CD8-positive, alpha-beta T cell (primary cell): ENCODE measurements at regions of chr16 and their contacts with region 1.

Region 1: DNA sequence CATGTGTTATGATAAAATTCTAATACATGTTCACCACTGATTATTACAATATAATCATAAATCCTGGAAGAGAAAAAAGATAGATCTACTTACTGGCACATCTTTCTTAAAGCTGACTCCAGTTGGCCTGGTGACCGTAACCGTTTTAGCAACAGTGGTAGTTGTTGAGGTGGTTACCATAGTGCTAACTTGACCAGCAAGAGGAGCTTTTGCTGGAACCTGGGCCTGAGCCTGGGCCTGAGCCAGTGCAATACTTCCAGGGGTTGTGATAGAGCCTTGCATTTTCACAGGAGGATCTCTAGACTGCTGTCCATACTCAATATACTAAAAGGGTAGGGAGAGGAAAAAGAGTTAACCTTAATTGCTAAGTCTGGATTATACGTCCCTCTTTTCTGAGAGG is 36.2 kb downstream of the SETD6 start:
- DNase-seq: no peak
- ATAC-seq: no peak
- H3K4me3 ChIP-seq: no peak overlapping the region
- H3K4me3 Mint-ChIP-seq: no peak overlapping the region
- H3K27ac ChIP-seq: no peak overlapping the region
- H3K27ac Mint-ChIP-seq: no peak overlapping the region
- H3K4me1 ChIP-seq: no peaks in the 10 kb centered on the region
- H3K4me1 Mint-ChIP-seq: no peaks in the 10 kb centered on the region
- H3K27me3 ChIP-seq: no peaks in the 10 kb centered on the region
- H3K27me3 Mint-ChIP-seq: no peaks in the 10 kb centered on the region
- CTCF ChIP-seq: no peak

Region 2: GRCh38 chr16:58563235-58563634 is 11.7 kb after region 1 on chr16:
- CTCF ChIA-PET with region 1: no interaction called
- POLR2A ChIA-PET with region 1: interaction called, 3 read pairs
- intact Hi-C with region 1: loop called in 1 of 2 experiments (anchors 2 kb)
- DNase-seq: no peak
- ATAC-seq: no peak
- H3K4me3 ChIP-seq: no peak overlapping the region
- H3K4me3 Mint-ChIP-seq: no peak overlapping the region
- H3K27ac ChIP-seq: no peak overlapping the region
- H3K27ac Mint-ChIP-seq: no peak overlapping the region
- H3K4me1 ChIP-seq: no peaks in the 10 kb centered on the region
- H3K4me1 Mint-ChIP-seq: peaks cover 6% of the 10 kb centered on the region
- H3K27me3 ChIP-seq: no peaks in the 10 kb centered on the region
- H3K27me3 Mint-ChIP-seq: no peaks in the 10 kb centered on the region
- CTCF ChIP-seq: no peak

Region 3: DNA sequence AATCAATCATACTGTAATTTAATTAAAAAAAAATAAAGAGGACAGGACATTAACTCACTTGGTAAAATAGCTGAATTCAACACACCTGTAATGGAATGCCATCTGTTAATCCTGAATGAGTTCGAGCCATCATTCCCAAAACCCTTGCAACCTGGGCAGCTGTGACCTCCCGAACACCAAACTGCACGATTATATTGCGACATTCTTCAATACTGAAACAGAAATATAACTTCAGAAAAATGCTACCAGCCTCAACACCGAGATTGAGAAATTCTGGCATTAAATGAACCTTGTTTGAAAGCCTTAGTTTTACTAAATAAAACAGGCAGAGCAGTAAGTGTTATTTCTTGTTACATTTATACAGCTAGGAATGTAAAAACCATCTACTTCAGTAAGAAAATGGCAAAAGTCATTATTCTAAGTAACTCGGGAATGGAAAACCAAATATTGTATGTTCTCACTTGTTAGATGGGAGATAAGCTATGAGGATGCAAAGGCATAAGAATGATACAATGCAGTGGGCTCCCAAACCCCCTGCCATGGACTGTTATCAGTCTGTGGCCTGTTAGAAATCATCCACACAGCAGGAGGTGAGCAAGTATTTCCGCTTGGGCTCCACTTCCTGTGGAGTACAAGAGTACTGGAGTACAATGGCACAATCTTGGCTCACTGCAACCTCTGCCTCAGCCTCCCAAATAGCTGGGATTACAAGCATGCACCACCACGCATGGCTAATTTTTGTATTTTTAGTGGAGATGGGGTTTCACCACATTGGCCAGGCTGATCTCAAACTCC is 31.7 kb after region 1 on chr16:
- CTCF ChIA-PET with region 1: no interaction called
- POLR2A ChIA-PET with region 1: no interaction called
- intact Hi-C with region 1: loop called in 1 of 2 experiments (anchors 5 kb)
- DNase-seq: no peak
- ATAC-seq: no peak
- H3K4me3 ChIP-seq: no peak overlapping the region
- H3K4me3 Mint-ChIP-seq: no peak overlapping the region
- H3K27ac ChIP-seq: no peak overlapping the region
- H3K27ac Mint-ChIP-seq: no peak overlapping the region
- H3K4me1 ChIP-seq: no peaks in the 10 kb centered on the region
- H3K4me1 Mint-ChIP-seq: peaks cover 7% of the 10 kb centered on the region
- H3K27me3 ChIP-seq: no peaks in the 10 kb centered on the region
- H3K27me3 Mint-ChIP-seq: no peaks in the 10 kb centered on the region
- CTCF ChIP-seq: no peak

Region 4: DNA sequence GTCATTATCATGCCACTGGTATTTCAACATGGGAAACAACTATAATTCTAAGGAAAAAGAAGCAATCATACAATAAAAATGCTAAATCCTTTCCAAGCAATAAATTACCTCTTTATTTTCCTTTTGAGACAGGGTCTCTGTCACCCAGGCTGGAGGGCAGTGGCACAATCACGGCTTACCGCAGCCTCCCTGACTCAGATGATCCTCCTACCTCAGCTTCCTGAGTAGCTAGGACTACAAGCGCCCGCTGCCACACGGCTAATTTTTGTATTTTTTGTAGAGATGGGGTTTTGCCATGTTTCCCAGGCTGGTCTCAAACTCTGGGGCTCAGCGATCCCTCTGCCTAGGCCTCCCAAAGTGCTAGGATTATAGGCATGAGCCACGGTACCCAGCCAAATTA is 54.1 kb after region 1 on chr16:
- CTCF ChIA-PET with region 1: no interaction called
- POLR2A ChIA-PET with region 1: no interaction called
- intact Hi-C with region 1: loop called in 1 of 2 experiments (anchors 10 kb)
- DNase-seq: no peak
- ATAC-seq: no peak
- H3K4me3 ChIP-seq: no peak overlapping the region
- H3K4me3 Mint-ChIP-seq: no peak overlapping the region
- H3K27ac ChIP-seq: no peak overlapping the region
- H3K27ac Mint-ChIP-seq: peak overlapping the region; percentile 60
- H3K4me1 ChIP-seq: peaks cover 15% of the 10 kb centered on the region
- H3K4me1 Mint-ChIP-seq: peaks cover 55% of the 10 kb centered on the region
- H3K27me3 ChIP-seq: no peaks in the 10 kb centered on the region
- H3K27me3 Mint-ChIP-seq: no peaks in the 10 kb centered on the region
- CTCF ChIP-seq: no peak